T-cell (primary cell): ENCODE measurements at regions of chr2 and their contacts with region 1.

Region 1: GRCh38 chr2:28894470-28895177 is at the start of gene WDR43:
- DNase-seq: peak; percentile 93 to 99 (median 97)
- ATAC-seq: peak; percentile 94 to 98 (median 96)
- H3K4me3 ChIP-seq: peak within 1 kb of the TSS; percentile 91 to 92
- H3K4me3 Mint-ChIP-seq: peak within 1 kb of the TSS; percentile 91 to 99 (median 98)
- H3K27ac ChIP-seq: peak within 1 kb of the TSS; percentile 72
- H3K27ac Mint-ChIP-seq: peak within 1 kb of the TSS; percentile 86 to 87
- H3K4me1 ChIP-seq: peaks cover 17 to 25% of the 10 kb centered on the region in 2 experiments
- H3K4me1 Mint-ChIP-seq: peaks cover 43 to 45% (median 45%) of the 10 kb centered on the region in 3 donors
- H3K27me3 ChIP-seq: no peaks in the 10 kb centered on the region
- H3K27me3 Mint-ChIP-seq: no peaks in the 10 kb centered on the region
- total RNA-seq, gene WDR43: 58.0 to 68.4 (median 62.9) TPM

Region 2: DNA sequence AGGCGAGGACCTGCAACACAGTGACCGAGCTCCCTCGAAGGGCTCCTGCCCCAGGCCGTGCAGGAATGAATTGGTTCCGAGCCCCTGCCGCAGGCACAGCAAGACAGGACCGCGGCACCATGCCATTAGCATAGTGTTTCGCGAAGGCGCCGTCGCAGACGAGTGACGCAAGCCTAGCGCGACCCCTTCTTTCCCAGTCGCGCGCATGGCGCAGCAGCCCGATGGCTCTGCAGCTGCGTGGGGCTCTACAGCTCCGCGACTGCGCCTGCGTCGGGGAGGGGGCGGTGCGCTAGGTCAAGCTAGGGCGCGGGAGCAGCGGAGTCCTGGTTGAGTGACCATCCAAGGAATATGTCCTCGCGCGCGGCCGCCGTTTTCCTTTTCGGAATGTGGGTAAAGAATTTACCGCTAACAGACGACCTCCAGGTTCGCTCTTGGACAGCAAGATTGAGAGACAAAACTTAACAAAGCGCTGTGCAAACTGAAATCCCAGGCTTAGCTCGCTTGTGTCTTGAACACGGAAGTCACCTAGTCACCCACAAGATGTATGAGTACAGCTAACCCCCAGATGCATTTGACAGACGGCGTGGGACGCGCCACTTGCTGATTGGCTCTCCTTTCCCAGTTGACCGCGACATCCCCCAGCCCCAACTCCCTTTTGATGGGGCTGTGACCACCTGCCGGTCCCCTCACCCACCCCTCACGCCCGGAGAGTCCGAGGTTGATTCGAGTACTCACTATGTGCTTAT is 24.3 kb before region 1 on chr2 and contains the start of gene TRMT61B:
- CTCF ChIA-PET with region 1: interaction called in 1 of 2 experiments, 16 read pairs
- POLR2A ChIA-PET with region 1: interaction called, 3 to 49 read pairs
- DNase-seq: peak; percentile 91 to 98 (median 96)
- ATAC-seq: peak; percentile 95 to 97 (median 96)
- H3K4me3 ChIP-seq: peak within 1 kb of the TSS; percentile 76 to 93
- H3K4me3 Mint-ChIP-seq: peak within 1 kb of the TSS; percentile 95 to 99 (median 96)
- H3K27ac ChIP-seq: peak within 1 kb of the TSS; percentile 92
- H3K27ac Mint-ChIP-seq: peak within 1 kb of the TSS; percentile 99 to 100
- H3K4me1 ChIP-seq: peaks cover 17 to 36% of the 10 kb centered on the region in 2 experiments
- H3K4me1 Mint-ChIP-seq: peaks cover 36 to 43% (median 41%) of the 10 kb centered on the region in 3 donors
- H3K27me3 ChIP-seq: peaks cover 0 to 2% of the 10 kb centered on the region in 2 experiments
- H3K27me3 Mint-ChIP-seq: peaks cover 2% of the 10 kb centered on the region in 2 donors
- total RNA-seq, gene TRMT61B: 14.8 to 20.4 (median 17.0) TPM

Region 3: GRCh38 chr2:28904802-28905499 is 10.3 kb after region 1 on chr2:
- CTCF ChIA-PET with region 1: interaction called in 1 of 2 experiments, 6 read pairs
- POLR2A ChIA-PET with region 1: interaction called in 1 of 2 experiments, 13 read pairs
- DNase-seq: no peak
- ATAC-seq: no peak
- H3K4me3 ChIP-seq: no peak overlapping the region
- H3K4me3 Mint-ChIP-seq: no peak overlapping the region
- H3K27ac ChIP-seq: no peak overlapping the region
- H3K27ac Mint-ChIP-seq: peak overlapping the region in 1 of 2 donors; percentile 8
- H3K4me1 ChIP-seq: no peaks in the 10 kb centered on the region
- H3K4me1 Mint-ChIP-seq: peaks cover 28 to 49% (median 41%) of the 10 kb centered on the region in 3 donors
- H3K27me3 ChIP-seq: no peaks in the 10 kb centered on the region
- H3K27me3 Mint-ChIP-seq: no peaks in the 10 kb centered on the region